WTC11 (cell line): ENCODE measurements at regions of chr11 and their contacts with region 1.

Region 1: DNA sequence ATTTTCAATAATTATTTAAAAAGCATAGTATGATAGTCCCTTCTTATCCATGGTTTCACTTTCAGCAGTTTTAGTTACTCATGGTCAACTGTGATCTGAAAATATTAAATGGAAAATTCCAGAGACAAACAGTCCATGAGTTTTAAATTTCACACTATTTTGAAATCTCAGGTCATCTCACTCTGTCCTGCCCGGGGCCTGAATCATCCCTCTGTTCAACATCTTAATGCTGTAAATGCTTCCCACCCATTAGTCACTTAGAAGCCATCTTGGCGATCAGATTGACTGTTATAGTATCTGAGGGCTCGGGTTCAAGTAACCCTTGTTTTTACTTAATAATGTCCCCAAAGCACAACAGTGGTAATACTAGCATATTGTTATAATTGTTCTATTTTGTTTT is 1509.3 kb downstream of the FAM181B start:
- DNase-seq: no peak
- ATAC-seq: no peak
- H3K4me3 Mint-ChIP-seq: no peak overlapping the region
- H3K27ac Mint-ChIP-seq: no peak overlapping the region
- H3K4me1 Mint-ChIP-seq: no peaks in the 10 kb centered on the region
- H3K27me3 Mint-ChIP-seq: no peaks in the 10 kb centered on the region
- CTCF ChIP-seq: no peak

Region 2: DNA sequence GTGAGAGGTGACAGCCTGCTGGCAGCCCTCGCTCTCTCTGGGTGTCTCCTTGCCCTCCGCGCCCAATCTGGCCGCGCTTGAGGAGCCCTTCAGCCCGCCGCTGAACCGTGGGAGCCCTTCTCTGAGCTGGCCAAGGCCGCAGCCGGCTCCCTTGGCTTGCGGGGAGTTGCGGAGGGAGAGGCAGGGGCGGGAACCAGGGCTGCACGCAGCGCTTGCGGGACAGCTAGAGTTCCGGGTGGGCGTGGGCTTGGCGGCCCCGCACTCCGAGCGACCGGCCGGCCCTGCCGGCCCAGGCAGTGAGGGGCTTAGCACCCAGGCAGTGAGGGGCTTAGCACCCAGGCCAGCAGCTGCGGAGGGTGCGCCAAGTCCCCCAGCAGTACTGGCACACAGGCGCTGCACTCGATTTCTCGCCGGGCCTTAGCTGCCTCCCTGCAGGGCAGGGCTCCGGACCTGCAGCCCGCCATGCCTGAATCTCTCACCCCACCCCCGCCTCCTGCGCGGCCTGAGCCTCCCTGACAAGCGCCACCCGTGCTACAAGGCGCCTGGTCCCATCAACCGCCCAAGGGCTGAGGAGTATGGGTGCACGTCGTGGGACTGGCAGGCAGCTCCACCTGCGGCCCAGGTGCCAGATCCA is 16.9 kb before region 1 on chr11:
- CTCF ChIA-PET with region 1: no interaction called
- POLR2A ChIA-PET with region 1: no interaction called
- DNase-seq: peak; percentile 11
- ATAC-seq: no peak; the same call in 1 of the 2 replicates
- H3K4me3 Mint-ChIP-seq: no peak overlapping the region
- H3K27ac Mint-ChIP-seq: no peak overlapping the region
- H3K4me1 Mint-ChIP-seq: no peaks in the 10 kb centered on the region
- H3K27me3 Mint-ChIP-seq: no peaks in the 10 kb centered on the region
- CTCF ChIP-seq: no peak

Region 3: DNA sequence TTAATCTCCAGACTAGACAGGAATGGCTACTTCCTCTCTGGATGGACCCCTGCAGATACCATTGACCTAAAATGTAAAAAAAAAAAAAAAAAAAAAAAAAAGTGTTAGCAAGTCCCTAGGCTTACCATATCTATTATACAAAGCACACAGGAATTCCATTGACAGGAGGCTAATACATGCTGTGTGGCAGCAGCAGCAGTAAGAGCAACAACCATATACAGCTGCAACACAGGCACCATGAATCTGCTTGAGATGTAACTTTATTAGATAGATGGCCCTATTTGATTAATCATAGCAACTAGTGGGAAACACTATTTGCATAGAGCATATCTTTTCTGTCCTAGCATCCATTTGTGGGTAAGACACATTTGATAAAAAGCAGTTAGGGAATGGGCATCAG is 62.2 kb after region 1 on chr11:
- CTCF ChIA-PET with region 1: no interaction called
- POLR2A ChIA-PET with region 1: interaction called, 10 read pairs
- DNase-seq: no peak
- ATAC-seq: no peak
- H3K4me3 Mint-ChIP-seq: no peak overlapping the region
- H3K27ac Mint-ChIP-seq: no peak overlapping the region
- H3K4me1 Mint-ChIP-seq: peaks cover 16% of the 10 kb centered on the region
- H3K27me3 Mint-ChIP-seq: peaks cover 3% of the 10 kb centered on the region; the same call in 1 of the 2 replicates
- CTCF ChIP-seq: no peak

Region 4: DNA sequence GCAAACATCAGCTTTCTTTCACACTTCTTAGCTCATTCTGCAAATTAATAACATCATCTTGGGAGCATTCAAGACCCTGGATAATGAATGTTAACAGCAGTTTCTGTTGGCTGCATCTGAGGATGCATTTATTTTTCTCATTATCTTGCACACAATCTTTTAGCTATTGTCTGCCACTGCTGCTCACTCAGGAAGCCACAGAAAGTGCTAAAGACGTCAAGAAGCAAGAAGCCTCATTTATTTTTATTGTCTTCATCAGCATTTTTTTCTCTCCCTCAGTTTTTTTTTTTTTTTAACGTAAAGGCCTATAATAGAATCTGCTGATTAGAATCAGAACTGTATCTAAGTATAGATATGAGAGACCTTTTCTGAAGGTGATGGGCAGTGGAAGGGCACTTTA is 169.9 kb after region 1 on chr11:
- CTCF ChIA-PET with region 1: no interaction called
- POLR2A ChIA-PET with region 1: no interaction called
- DNase-seq: no peak
- ATAC-seq: no peak
- H3K4me3 Mint-ChIP-seq: no peak overlapping the region
- H3K27ac Mint-ChIP-seq: no peak overlapping the region
- H3K4me1 Mint-ChIP-seq: no peaks in the 10 kb centered on the region
- H3K27me3 Mint-ChIP-seq: no peaks in the 10 kb centered on the region; the same call in 1 of the 2 replicates
- CTCF ChIP-seq: no peak